Activated CD4-positive, alpha-beta memory T cell treated with anti-CD3 and anti-CD28 coated beads for 36 hours (primary cell): ENCODE measurements at regions of chr13 and their contacts with region 1.

Region 1: GRCh38 chr13:41061075-41061913 is at the start of gene WBP4:
- DNase-seq: peak; percentile 92
- H3K4me3 Mint-ChIP-seq: peak within 1 kb of the TSS; percentile 97
- H3K27ac Mint-ChIP-seq: peak within 1 kb of the TSS; percentile 99
- H3K4me1 Mint-ChIP-seq: peaks cover 44% of the 10 kb centered on the region
- H3K27me3 Mint-ChIP-seq: no peaks in the 10 kb centered on the region
- total RNA-seq, gene WBP4: 12.6 to 13.5 TPM

Region 2: GRCh38 chr13:40974460-40975407 is 86.6 kb before region 1 on chr13:
- CTCF ChIA-PET with region 1: interaction called, 13 read pairs
- POLR2A ChIA-PET with region 1: interaction called, 3 read pairs
- intact Hi-C with region 1: no loop called
- DNase-seq: peak; percentile 45
- H3K4me3 Mint-ChIP-seq: peak overlapping the region; percentile 56
- H3K27ac Mint-ChIP-seq: peak overlapping the region; percentile 92
- H3K4me1 Mint-ChIP-seq: peaks cover 87% of the 10 kb centered on the region
- H3K27me3 Mint-ChIP-seq: no peaks in the 10 kb centered on the region

Region 3: GRCh38 chr13:41019011-41019487 is 42.2 kb before region 1 on chr13 and contains the start of gene ELF1:
- CTCF ChIA-PET with region 1: interaction called, 5 read pairs
- POLR2A ChIA-PET with region 1: interaction called, 13 read pairs
- intact Hi-C with region 1: loop called (anchors 1 kb)
- DNase-seq: peak; percentile 67
- H3K4me3 Mint-ChIP-seq: peak within 1 kb of the TSS; percentile 92
- H3K27ac Mint-ChIP-seq: peak within 1 kb of the TSS; percentile 98
- H3K4me1 Mint-ChIP-seq: peaks cover 36% of the 10 kb centered on the region
- H3K27me3 Mint-ChIP-seq: no peaks in the 10 kb centered on the region
- total RNA-seq, gene ELF1: 70.8 to 71.2 TPM

Region 4: GRCh38 chr13:41193919-41194824 is 132.9 kb after region 1 on chr13 and contains the start of gene KBTBD7:
- CTCF ChIA-PET with region 1: interaction called, 3 read pairs
- POLR2A ChIA-PET with region 1: interaction called, 3 read pairs
- intact Hi-C with region 1: loop called (anchors 1 kb)
- DNase-seq: peak; percentile 96
- H3K4me3 Mint-ChIP-seq: peak within 1 kb of the TSS; percentile 90
- H3K27ac Mint-ChIP-seq: peak within 1 kb of the TSS; percentile 92
- H3K4me1 Mint-ChIP-seq: peaks cover 43% of the 10 kb centered on the region
- H3K27me3 Mint-ChIP-seq: no peaks in the 10 kb centered on the region
- total RNA-seq, gene KBTBD7: 3.6 to 4.1 TPM

Region 5: GRCh38 chr13:41310963-41311606 is 249.8 kb after region 1 on chr13 and contains the start of gene NAA16:
- CTCF ChIA-PET with region 1: no interaction called
- POLR2A ChIA-PET with region 1: interaction called, 3 read pairs
- intact Hi-C with region 1: loop called (anchors 2 kb)
- DNase-seq: peak; percentile 97
- H3K4me3 Mint-ChIP-seq: peak within 1 kb of the TSS; percentile 93
- H3K27ac Mint-ChIP-seq: peak within 1 kb of the TSS; percentile 92
- H3K4me1 Mint-ChIP-seq: peaks cover 34% of the 10 kb centered on the region
- H3K27me3 Mint-ChIP-seq: no peaks in the 10 kb centered on the region
- total RNA-seq, gene NAA16: 19.2 to 23.2 TPM

Region 6: DNA sequence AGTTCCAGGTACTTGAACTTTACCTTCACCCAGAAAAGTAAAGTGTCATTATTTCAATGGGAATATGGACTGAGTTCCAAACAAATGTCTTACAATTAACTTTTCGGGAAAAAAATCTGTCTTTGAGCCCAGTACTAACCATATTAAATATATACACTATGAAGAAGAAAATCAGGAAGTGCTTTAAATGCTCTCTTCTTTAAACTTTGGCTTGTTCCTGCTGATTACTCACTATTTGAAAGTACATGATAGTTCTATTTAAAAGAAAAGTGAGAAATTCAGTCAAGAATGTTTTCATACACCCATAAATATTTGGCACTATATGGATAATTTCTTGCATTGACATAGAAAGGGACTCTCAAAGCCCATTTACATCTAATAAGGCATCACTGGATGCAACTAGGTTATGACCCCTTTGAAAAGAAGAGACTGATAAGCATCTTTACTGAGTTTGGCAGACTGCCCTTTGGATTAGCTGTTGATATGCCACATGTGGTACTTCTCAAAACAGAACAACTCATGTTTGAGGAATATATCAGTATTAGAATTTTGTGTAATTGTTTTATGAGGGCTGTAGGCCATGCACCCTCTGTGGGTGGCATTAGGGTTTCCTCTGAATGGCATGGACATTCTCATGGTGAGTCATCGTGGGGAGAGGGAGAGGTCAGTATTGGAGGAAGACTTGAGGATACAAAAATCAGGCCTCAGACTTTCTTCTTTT is 924.7 kb after region 1 on chr13:
- CTCF ChIA-PET with region 1: no interaction called
- POLR2A ChIA-PET with region 1: no interaction called
- intact Hi-C with region 1: no loop called
- DNase-seq: no peak
- H3K4me3 Mint-ChIP-seq: no peak overlapping the region
- H3K27ac Mint-ChIP-seq: no peak overlapping the region
- H3K4me1 Mint-ChIP-seq: peaks cover 8% of the 10 kb centered on the region
- H3K27me3 Mint-ChIP-seq: peaks cover 5% of the 10 kb centered on the region